ENCODE measurements at regions of chr17 and their contacts with region 1.

Region 1: GRCh38 chr17:882827-883585 is 96.6 kb downstream of the NXN start:
- DNase-seq: no peak
- H3K4me3 ChIP-seq: no peak overlapping the region
- H3K27me3 ChIP-seq: no peaks in the 10 kb centered on the region
- CTCF ChIP-seq: no peak

Region 2: DNA sequence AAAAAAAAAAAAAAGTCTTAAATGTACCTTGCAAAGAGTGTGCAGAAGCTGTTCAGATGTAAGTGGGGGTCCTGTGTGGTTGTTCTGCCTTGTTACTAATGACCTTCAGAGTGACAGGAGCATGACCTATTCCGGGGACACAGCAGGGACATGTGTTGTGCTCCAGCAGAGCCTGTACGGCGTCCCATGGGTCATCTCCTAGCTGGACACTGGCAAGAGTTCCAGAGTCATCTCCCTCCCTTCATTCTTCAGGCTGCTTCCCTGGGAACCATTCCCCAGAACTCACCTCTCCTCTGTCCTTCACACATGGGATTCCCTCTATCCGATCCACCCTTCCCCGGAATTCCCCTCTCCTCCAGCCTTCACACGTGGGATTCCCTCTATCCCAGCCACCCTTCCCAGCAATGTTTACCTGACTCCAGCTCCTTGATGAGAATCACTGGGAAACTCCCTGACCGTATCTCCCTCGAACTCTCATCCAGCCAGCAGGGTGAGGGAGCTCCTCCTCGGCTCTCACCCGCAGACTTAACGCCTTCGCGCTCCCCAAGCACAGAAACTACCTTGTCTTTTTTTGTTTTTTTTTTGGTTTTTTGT is 15.0 kb before region 1 on chr17:
- CTCF ChIA-PET with region 1: interaction called, 3 read pairs
- POLR2A ChIA-PET with region 1: interaction called, 23 read pairs
- DNase-seq: no peak
- H3K4me3 ChIP-seq: no peak overlapping the region
- H3K27me3 ChIP-seq: no peaks in the 10 kb centered on the region
- CTCF ChIP-seq: no peak

Measured in BJ (cell line).